ENCODE measurements at regions of chr15 and their contacts with region 1.

Region 1: DNA sequence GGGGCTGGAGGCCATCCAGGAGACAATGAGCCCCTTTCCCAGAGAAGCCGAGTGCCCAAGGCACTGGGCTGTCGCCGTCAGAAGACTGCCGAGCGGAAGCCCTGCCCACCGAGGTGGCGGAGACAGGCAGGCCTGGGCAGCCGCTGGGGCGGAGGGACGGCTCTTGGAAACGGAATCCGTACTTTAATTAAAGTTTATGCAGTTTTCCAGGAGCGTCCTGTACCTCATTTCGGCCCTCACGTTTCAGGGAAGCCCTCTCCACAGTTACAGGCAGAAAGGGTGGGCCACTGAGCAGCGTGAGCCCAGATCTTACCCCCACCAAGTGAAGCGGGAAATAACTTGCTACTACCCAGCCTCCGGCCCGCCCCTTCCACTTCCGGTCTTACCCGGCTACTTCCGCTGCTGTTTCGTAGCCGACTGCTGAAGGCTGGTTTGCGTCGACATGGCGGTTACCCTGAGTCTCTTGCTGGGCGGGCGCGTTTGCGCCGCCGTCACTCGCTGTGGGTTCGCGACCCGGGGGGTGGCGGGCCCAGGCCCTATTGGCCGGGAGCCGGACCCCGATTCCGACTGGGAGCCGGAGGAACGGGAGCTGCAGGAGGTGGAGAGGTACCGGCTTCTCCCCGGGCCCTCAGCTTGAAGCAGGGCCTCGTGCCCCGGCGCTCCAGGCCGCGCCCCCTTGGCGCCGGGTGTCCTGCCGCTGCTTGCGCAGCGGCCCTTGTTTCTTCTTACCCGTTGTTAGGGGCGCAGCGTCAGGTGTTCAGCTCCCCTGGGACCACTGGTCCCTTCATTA is at the start of gene NGRN:
- DNase-seq: peak; percentile 94
- H3K4me3 Mint-ChIP-seq: peak within 1 kb of the TSS; percentile 99
- H3K27ac Mint-ChIP-seq: peak within 1 kb of the TSS; percentile 93
- H3K4me1 Mint-ChIP-seq: peaks cover 40% of the 10 kb centered on the region
- H3K27me3 Mint-ChIP-seq: no peaks in the 10 kb centered on the region
- CTCF ChIP-seq: no peak
- total RNA-seq, gene NGRN: 110 and 114 TPM in 2 replicates

Region 2: GRCh38 chr15:90154861-90155626 is 110.4 kb before region 1 on chr15:
- CTCF ChIA-PET with region 1: interaction called, 11 read pairs
- intact Hi-C with region 1: no loop called
- DNase-seq: peak; percentile 24
- H3K4me3 Mint-ChIP-seq: no peak overlapping the region
- H3K27ac Mint-ChIP-seq: no peak overlapping the region
- H3K4me1 Mint-ChIP-seq: peaks cover 38% of the 10 kb centered on the region
- H3K27me3 Mint-ChIP-seq: no peaks in the 10 kb centered on the region
- CTCF ChIP-seq: no peak

Region 3: GRCh38 chr15:90300988-90301706 is 35.7 kb after region 1 on chr15:
- CTCF ChIA-PET with region 1: no interaction called
- intact Hi-C with region 1: loop called (anchors 2 kb)
- DNase-seq: peak; percentile 76
- H3K4me3 Mint-ChIP-seq: no peak overlapping the region
- H3K27ac Mint-ChIP-seq: no peak overlapping the region
- H3K4me1 Mint-ChIP-seq: no peaks in the 10 kb centered on the region
- H3K27me3 Mint-ChIP-seq: no peaks in the 10 kb centered on the region
- CTCF ChIP-seq: peak; percentile 86